PC-9 (cell line): ENCODE measurements at regions of chr5 and their contacts with region 1.

Region 1: GRCh38 chr5:179907570-179908324 is at the start of gene TBC1D9B:
- DNase-seq: peak in 1 of 2 experiments; percentile 69
- H3K4me3 ChIP-seq: peak within 1 kb of the TSS; percentile 95
- H3K27ac ChIP-seq: 0 out of 2 replicates have a peak within 1 kb of the TSS, but pooled peaks have one; percentile 9
- H3K4me1 ChIP-seq: peaks cover 11% of the 10 kb centered on the region
- H3K27me3 ChIP-seq: no peaks in the 10 kb centered on the region
- CTCF ChIP-seq: 0 out of 2 replicates have a peak, but pooled peaks have one; percentile 17
- total RNA-seq, gene TBC1D9B: 118 and 148 TPM in 2 replicates

Region 2: DNA sequence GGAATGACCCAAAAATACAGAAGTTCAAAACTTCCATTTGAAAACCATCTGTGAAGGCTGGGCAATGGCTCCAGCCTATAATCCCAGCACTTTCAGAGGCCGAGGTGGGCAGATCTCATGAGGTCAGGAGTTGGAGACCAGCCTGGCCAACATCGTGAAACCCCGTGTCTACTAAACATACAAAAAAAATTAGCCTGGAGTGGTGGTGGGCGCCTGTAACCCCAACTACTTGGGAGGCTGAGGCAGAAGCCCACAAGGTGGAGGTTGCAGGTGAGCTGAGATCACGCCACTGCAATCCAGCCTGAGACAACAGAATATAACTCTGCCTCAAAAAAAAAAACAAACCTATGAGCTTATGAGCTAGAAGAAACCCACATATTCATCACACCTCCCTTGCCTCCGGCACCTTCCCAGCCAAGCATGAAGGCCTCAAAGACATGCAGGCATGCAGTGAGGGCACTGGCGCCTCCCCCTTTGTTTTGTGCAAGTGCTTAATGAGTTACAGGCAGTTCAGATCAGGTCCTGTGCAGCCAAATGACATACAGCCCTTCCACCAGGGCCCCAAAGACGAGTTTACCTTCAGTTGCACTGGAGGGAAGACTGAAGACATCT is 294.2 kb before region 1 on chr5:
- CTCF ChIA-PET with region 1: no interaction called
- POLR2A ChIA-PET with region 1: interaction called, 15 read pairs
- intact Hi-C with region 1: no loop called
- DNase-seq: no peak
- H3K4me3 ChIP-seq: no peak overlapping the region
- H3K27ac ChIP-seq: no peak overlapping the region
- H3K4me1 ChIP-seq: no peaks in the 10 kb centered on the region; the same call in 1 of the 2 replicates
- H3K27me3 ChIP-seq: no peaks in the 10 kb centered on the region
- CTCF ChIP-seq: no peak

Region 3: GRCh38 chr5:179806250-179807222 is 101.2 kb before region 1 on chr5 and contains the start of gene MGAT4B:
- CTCF ChIA-PET with region 1: interaction called, 3 read pairs
- POLR2A ChIA-PET with region 1: no interaction called
- intact Hi-C with region 1: loop called (anchors 10 kb)
- DNase-seq: peak in 1 of 2 experiments; percentile 83
- H3K4me3 ChIP-seq: peak within 1 kb of the TSS; percentile 98
- H3K27ac ChIP-seq: peak within 1 kb of the TSS; percentile 53
- H3K4me1 ChIP-seq: peaks cover 40% of the 10 kb centered on the region
- H3K27me3 ChIP-seq: no peaks in the 10 kb centered on the region
- CTCF ChIP-seq: no peak
- total RNA-seq, gene MGAT4B: 337 and 413 TPM in 2 replicates

Region 4: DNA sequence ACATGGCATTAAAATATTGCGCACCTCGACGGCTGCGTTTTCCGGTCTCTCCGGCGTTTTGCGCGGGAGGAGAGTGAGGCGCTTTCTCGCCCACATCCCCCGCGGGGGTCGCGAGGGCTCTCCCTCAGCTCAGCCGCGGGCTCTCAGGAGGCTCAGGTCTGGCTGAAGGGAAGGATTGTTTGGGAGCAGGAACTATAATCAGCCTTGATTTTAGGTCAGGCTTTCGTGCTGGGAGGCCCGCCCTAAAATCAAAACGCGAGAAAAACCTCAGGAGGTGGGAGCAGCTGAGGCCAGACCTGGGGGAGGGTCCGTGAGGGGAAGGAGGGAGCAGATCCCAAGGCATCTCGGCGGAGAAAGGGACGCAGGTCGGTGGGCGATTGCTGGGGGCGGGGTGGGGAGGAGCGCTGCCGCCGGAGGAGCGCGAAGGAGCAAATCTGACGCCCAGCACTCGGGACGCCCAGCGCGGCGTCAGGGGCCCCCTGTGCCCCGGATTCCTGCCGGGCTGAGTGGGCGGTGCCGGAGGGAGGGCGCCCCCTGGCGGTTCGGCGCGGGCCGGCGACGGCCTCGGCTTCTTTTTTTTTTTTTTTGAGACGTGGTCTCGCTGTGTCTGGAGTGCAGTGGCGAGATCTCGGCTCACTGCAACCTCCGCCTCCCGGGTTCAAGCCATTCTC is 182.5 kb after region 1 on chr5:
- CTCF ChIA-PET with region 1: no interaction called
- POLR2A ChIA-PET with region 1: no interaction called
- intact Hi-C with region 1: loop called (anchors 5 kb)
- DNase-seq: peak in 1 of 2 experiments; percentile 84
- H3K4me3 ChIP-seq: peak overlapping the region; percentile 41; the same call in 1 of the 2 replicates
- H3K27ac ChIP-seq: no peak overlapping the region
- H3K4me1 ChIP-seq: peaks cover 8% of the 10 kb centered on the region
- H3K27me3 ChIP-seq: no peaks in the 10 kb centered on the region
- CTCF ChIP-seq: peak; percentile 82